ENCODE measurements at regions of chr5 and their contacts with region 1.

Region 1: DNA sequence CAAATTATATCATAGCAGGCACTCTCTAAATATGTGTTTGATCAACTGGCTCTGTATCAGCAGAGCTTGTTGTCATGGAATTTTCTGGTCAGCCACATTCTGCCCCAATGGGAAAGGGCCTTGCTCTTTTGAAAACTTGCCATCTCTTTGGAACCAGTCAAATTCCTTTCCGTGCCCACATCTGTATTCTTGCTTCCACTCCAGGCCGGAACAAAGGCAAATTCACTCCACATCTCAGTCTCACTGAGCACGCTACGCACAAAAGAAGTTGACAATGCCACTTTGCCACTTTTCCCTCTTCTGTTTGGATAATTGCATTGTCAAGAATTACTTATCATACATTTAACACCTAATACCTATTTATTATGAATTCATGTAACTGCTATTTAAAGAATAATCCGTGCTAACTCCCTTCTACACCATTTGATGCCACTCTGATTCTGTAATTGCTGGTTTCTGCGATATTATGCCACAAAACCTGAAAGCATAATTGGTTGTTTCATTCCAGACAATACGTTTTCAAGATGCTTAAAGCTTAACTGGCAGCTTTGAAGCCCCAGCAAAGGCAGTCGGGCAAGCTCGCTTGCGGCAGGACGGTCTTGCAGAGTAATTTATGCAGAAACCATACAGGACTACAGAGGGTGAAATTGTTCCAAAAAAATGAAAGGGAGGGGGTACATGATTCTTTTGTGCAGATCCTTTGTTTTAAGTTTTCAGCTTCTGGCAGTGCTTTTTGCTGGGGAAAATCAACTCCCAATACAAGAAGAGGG is 277.7 kb downstream of the MSX2 start:
- DNase-seq: peak in 1 of 10 donors; percentile 51

Region 2: GRCh38 chr5:175059687-175060211 is 57.7 kb after region 1 on chr5:
- intact Hi-C with region 1: loop called (anchors 2 kb)
- DNase-seq: peak; percentile 58 to 98 (median 88)

Measured in posterior cingulate gyrus (tissue), 11 donors.